ENCODE measurements at regions of chr4 and their contacts with region 1.

Region 1: GRCh38 chr4:2843263-2843940 is at the start of gene ADD1:
- DNase-seq: peak; percentile 87
- H3K4me3 ChIP-seq: peak within 1 kb of the TSS; percentile 91 to 99 (median 98)
- H3K27ac ChIP-seq: peak within 1 kb of the TSS; percentile 47
- H3K4me1 ChIP-seq: peaks cover 11% of the 10 kb centered on the region
- H3K27me3 ChIP-seq: no peaks in the 10 kb centered on the region
- CTCF ChIP-seq: no peak
- total RNA-seq, gene ADD1: 112 to 167 TPM

Region 2: GRCh38 chr4:2497931-2498330 is 345.5 kb before region 1 on chr4:
- CTCF ChIA-PET with region 1: no interaction called
- dilution Hi-C with region 1: loop called (anchors 5 kb)
- in situ Hi-C with region 1: no loop called
- intact Hi-C with region 1: no loop called
- DNase-seq: no peak
- H3K4me3 ChIP-seq: no peak overlapping the region
- H3K27ac ChIP-seq: no peak overlapping the region
- H3K4me1 ChIP-seq: no peaks in the 10 kb centered on the region
- H3K27me3 ChIP-seq: no peaks in the 10 kb centered on the region
- CTCF ChIP-seq: no peak

Region 3: GRCh38 chr4:2761035-2761923 is 82.1 kb before region 1 on chr4:
- CTCF ChIA-PET with region 1: no interaction called
- dilution Hi-C with region 1: no loop called
- in situ Hi-C with region 1: no loop called
- intact Hi-C with region 1: loop called (anchors 5 kb)
- DNase-seq: no peak
- H3K4me3 ChIP-seq: no peak overlapping the region
- H3K27ac ChIP-seq: no peak overlapping the region
- H3K4me1 ChIP-seq: peaks cover 15% of the 10 kb centered on the region
- H3K27me3 ChIP-seq: no peaks in the 10 kb centered on the region
- CTCF ChIP-seq: no peak

Region 4: DNA sequence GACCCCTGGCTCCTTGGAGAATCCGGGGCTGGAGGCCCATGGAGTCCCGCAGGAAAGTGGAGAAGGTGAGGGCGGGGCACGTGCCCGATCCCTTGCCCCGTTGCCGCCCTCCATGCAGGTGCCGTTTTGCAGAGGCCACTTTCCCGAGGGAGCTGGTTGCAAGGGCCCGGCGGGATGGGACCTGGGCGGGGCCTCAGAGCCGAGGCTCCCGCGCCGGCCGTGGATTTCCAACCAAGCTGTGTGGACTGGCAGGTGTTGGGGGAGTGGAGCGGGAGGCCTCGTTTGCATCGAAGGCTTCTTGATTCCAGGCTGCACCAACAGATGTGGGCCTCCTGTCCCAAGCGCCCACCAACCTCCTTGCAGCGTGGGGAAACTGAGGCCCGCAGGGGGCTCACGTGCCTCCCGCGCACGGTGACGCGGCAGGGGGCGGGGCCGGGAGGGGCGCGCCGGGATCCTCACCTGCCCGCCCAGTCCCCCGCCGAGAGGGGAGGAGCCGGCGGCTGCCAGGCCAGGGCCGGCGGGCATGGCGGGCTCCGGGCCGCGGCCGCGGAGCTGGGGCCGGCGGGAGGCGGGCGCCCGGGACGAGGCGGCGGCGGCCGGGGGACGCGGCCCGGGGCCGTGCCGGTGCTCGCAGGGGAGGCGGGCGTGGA is 25.6 kb before region 1 on chr4:
- CTCF ChIA-PET with region 1: no interaction called
- dilution Hi-C with region 1: no loop called
- in situ Hi-C with region 1: no loop called
- intact Hi-C with region 1: loop called (anchors 2 kb)
- DNase-seq: peak; percentile 38
- H3K4me3 ChIP-seq: peak overlapping the region; percentile 11 to 75 (median 68)
- H3K27ac ChIP-seq: no peak overlapping the region
- H3K4me1 ChIP-seq: peaks cover 9% of the 10 kb centered on the region
- H3K27me3 ChIP-seq: no peaks in the 10 kb centered on the region
- CTCF ChIP-seq: no peak

Region 5: DNA sequence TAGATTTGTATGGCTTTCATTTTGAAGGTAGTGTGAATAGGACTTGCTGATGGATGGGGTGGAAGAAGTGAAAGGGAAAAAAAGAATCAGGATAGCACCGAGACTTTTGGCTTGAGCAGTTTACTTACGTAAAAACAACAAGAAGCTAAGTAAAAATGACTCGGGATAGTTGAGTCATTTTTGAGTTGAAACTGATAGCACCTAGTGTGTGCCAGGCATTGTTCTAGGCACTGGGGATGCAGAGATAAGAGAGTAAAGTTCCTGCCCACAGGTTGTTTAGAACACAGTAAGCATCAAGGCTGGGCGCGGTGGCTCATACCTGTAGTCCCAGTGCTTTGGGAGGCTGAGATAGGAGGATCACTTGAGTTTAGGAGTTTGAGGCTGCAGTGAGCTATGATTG is 34.9 kb after region 1 on chr4:
- CTCF ChIA-PET with region 1: no interaction called
- dilution Hi-C with region 1: loop called (anchors 5 kb)
- in situ Hi-C with region 1: no loop called
- intact Hi-C with region 1: no loop called
- DNase-seq: no peak
- H3K4me3 ChIP-seq: no peak overlapping the region
- H3K27ac ChIP-seq: no peak overlapping the region
- H3K4me1 ChIP-seq: no peaks in the 10 kb centered on the region
- H3K27me3 ChIP-seq: no peaks in the 10 kb centered on the region
- CTCF ChIP-seq: no peak

Region 6: GRCh38 chr4:2923141-2923551 is 79.7 kb after region 1 on chr4:
- CTCF ChIA-PET with region 1: no interaction called
- dilution Hi-C with region 1: loop called (anchors 5 kb)
- in situ Hi-C with region 1: no loop called
- intact Hi-C with region 1: no loop called
- DNase-seq: peak; percentile 55
- H3K4me3 ChIP-seq: no peak overlapping the region
- H3K27ac ChIP-seq: no peak overlapping the region
- H3K4me1 ChIP-seq: no peaks in the 10 kb centered on the region
- H3K27me3 ChIP-seq: no peaks in the 10 kb centered on the region
- CTCF ChIP-seq: no peak

Region 7: GRCh38 chr4:2934813-2935761 is 91.7 kb after region 1 on chr4:
- CTCF ChIA-PET with region 1: no interaction called
- dilution Hi-C with region 1: no loop called
- in situ Hi-C with region 1: no loop called
- intact Hi-C with region 1: loop called (anchors 5 kb)
- DNase-seq: peak; percentile 87
- H3K4me3 ChIP-seq: peak overlapping the region; percentile 71 to 94 (median 86)
- H3K27ac ChIP-seq: peak overlapping the region; percentile 94
- H3K4me1 ChIP-seq: peaks cover 43% of the 10 kb centered on the region
- H3K27me3 ChIP-seq: no peaks in the 10 kb centered on the region
- CTCF ChIP-seq: no peak